CD4-positive, alpha-beta T cell (primary cell): ENCODE measurements at regions of chr1 and their contacts with region 1.

Region 1: GRCh38 chr1:213925531-213926182 is 62.1 kb upstream of the PROX1 start:
- DNase-seq: no peak
- ATAC-seq: no peak
- H3K4me3 ChIP-seq: no peak overlapping the region
- H3K4me3 Mint-ChIP-seq: no peak overlapping the region
- H3K27ac ChIP-seq: no peak overlapping the region
- H3K27ac Mint-ChIP-seq: no peak overlapping the region
- H3K4me1 ChIP-seq: no peaks in the 10 kb centered on the region
- H3K4me1 Mint-ChIP-seq: no peaks in the 10 kb centered on the region
- H3K27me3 ChIP-seq: no peaks in the 10 kb centered on the region
- H3K27me3 Mint-ChIP-seq: no peaks in the 10 kb centered on the region
- CTCF ChIP-seq: no peak

Region 2: GRCh38 chr1:213829780-213830179 is 95.9 kb before region 1 on chr1:
- CTCF ChIA-PET with region 1: no interaction called
- POLR2A ChIA-PET with region 1: no interaction called
- intact Hi-C with region 1: loop called in 1 of 2 experiments (anchors 5 kb)
- DNase-seq: no peak
- ATAC-seq: no peak
- H3K4me3 ChIP-seq: no peak overlapping the region
- H3K4me3 Mint-ChIP-seq: no peak overlapping the region
- H3K27ac ChIP-seq: no peak overlapping the region
- H3K27ac Mint-ChIP-seq: no peak overlapping the region
- H3K4me1 ChIP-seq: no peaks in the 10 kb centered on the region
- H3K4me1 Mint-ChIP-seq: no peaks in the 10 kb centered on the region
- H3K27me3 ChIP-seq: no peaks in the 10 kb centered on the region
- H3K27me3 Mint-ChIP-seq: no peaks in the 10 kb centered on the region
- CTCF ChIP-seq: no peak

Region 3: GRCh38 chr1:213969958-213970555 is 44.4 kb after region 1 on chr1:
- CTCF ChIA-PET with region 1: no interaction called
- POLR2A ChIA-PET with region 1: no interaction called
- intact Hi-C with region 1: loop called in 1 of 2 experiments (anchors 5 kb)
- DNase-seq: no peak
- ATAC-seq: no peak
- H3K4me3 ChIP-seq: no peak overlapping the region
- H3K4me3 Mint-ChIP-seq: no peak overlapping the region
- H3K27ac ChIP-seq: no peak overlapping the region
- H3K27ac Mint-ChIP-seq: no peak overlapping the region
- H3K4me1 ChIP-seq: no peaks in the 10 kb centered on the region
- H3K4me1 Mint-ChIP-seq: no peaks in the 10 kb centered on the region
- H3K27me3 ChIP-seq: no peaks in the 10 kb centered on the region
- H3K27me3 Mint-ChIP-seq: peaks cover 30% of the 10 kb centered on the region
- CTCF ChIP-seq: no peak